Right ventricle myocardium inferior (tissue), 1 donor: ENCODE measurements at regions of chr1 and their contacts with region 1.

Region 1: GRCh38 chr1:84433258-84434080 is 35.2 kb downstream of the DNASE2B start:
- DNase-seq: no peak
- ATAC-seq: peak; percentile 78

Region 2: GRCh38 chr1:84146411-84147032 is 286.9 kb before region 1 on chr1:
- intact Hi-C with region 1: loop called (anchors 5 kb)
- DNase-seq: no peak
- ATAC-seq: no peak

Region 3: GRCh38 chr1:84467298-84467697 is 33.8 kb after region 1 on chr1:
- intact Hi-C with region 1: no loop called
- DNase-seq: no peak
- ATAC-seq: no peak